ENCODE measurements at regions of chr10 and their contacts with region 1.

Region 1: GRCh38 chr10:125756196-125756595 is 19.4 kb downstream of the MMP21 start:
- DNase-seq: no peak
- H3K4me3 Mint-ChIP-seq: no peak overlapping the region
- H3K27ac Mint-ChIP-seq: no peak overlapping the region
- H3K4me1 Mint-ChIP-seq: no peaks in the 10 kb centered on the region
- H3K27me3 Mint-ChIP-seq: no peaks in the 10 kb centered on the region

Region 2: GRCh38 chr10:124975977-124976514 is 780.1 kb before region 1 on chr10:
- intact Hi-C with region 1: loop called (anchors 10 kb)
- DNase-seq: no peak
- H3K4me3 Mint-ChIP-seq: no peak overlapping the region
- H3K27ac Mint-ChIP-seq: no peak overlapping the region
- H3K4me1 Mint-ChIP-seq: peaks cover 13% of the 10 kb centered on the region
- H3K27me3 Mint-ChIP-seq: no peaks in the 10 kb centered on the region